Activated naive CD4-positive, alpha-beta T cell treated with anti-CD3 and anti-CD28 coated beads for 36 hours (primary cell): ENCODE measurements at regions of chr19 and their contacts with region 1.

Region 1: GRCh38 chr19:52734893-52735661 is at the start of gene ZNF611:
- DNase-seq: peak; percentile 99
- H3K4me3 Mint-ChIP-seq: peak within 1 kb of the TSS; percentile 85
- H3K27ac Mint-ChIP-seq: peak within 1 kb of the TSS; percentile 89
- H3K4me1 Mint-ChIP-seq: peaks cover 19% of the 10 kb centered on the region
- H3K27me3 Mint-ChIP-seq: no peaks in the 10 kb centered on the region
- total RNA-seq, gene ZNF611: 10.4 to 12.1 TPM

Region 2: DNA sequence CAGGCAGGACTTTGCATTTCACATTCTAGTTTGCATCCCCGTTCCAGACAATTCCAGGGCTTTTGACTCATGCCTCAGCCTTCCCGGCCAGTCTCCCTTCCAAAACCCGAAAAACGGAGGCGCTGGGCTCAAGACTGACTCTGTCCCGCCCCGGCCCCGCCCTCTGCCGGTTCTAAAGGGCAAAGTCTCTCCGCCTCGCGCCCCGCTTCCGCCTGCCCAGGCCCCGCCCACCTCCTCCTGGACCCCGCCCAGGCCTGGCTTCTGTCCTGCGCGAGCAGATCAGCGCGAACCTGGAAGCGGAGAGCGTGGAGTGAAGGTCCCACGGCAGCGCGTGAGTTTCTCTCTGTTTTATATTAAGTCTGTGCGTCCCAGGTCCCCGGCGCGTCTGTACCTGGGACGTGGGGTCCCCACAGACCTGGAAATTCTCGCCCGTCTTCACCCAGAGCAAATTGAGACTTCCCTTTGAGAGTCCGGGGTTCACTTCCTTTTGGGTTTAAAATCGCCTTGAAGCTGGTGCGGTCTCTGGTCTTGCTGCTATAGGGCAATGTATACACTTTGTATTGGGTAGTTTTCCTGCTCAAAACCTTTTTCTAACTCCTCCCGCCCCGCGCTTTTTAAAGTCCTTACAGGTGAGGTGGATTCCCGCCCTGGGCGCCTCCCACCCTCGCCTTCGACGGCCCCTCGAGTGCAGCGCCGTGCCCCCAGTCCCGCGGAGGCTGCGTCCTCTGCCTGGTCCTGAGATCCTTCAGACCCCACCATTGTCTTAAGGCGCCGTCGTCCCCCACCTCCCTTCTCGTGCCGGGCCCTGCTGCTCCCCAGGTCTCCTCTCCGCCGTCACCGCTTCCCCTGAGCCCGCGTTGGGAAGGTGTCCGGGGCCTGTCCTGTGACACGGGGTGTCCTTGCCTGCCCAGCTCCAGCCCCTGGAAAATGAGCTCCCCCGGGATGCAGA is 133.8 kb before region 1 on chr19:
- CTCF ChIA-PET with region 1: no interaction called
- intact Hi-C with region 1: loop called (anchors 10 kb)
- DNase-seq: peak; percentile 95
- H3K4me3 Mint-ChIP-seq: peak overlapping the region; percentile 79
- H3K27ac Mint-ChIP-seq: peak overlapping the region; percentile 79
- H3K4me1 Mint-ChIP-seq: peaks cover 18% of the 10 kb centered on the region
- H3K27me3 Mint-ChIP-seq: no peaks in the 10 kb centered on the region

Region 3: GRCh38 chr19:52637718-52638585 is 97.1 kb before region 1 on chr19 and contains the start of gene ZNF83:
- CTCF ChIA-PET with region 1: no interaction called
- intact Hi-C with region 1: loop called (anchors 2 kb)
- DNase-seq: peak; percentile 96
- H3K4me3 Mint-ChIP-seq: peak within 1 kb of the TSS; percentile 85
- H3K27ac Mint-ChIP-seq: peak within 1 kb of the TSS; percentile 92
- H3K4me1 Mint-ChIP-seq: peaks cover 9% of the 10 kb centered on the region
- H3K27me3 Mint-ChIP-seq: no peaks in the 10 kb centered on the region
- total RNA-seq, gene ZNF83: 23.3 to 23.9 TPM

Region 4: DNA sequence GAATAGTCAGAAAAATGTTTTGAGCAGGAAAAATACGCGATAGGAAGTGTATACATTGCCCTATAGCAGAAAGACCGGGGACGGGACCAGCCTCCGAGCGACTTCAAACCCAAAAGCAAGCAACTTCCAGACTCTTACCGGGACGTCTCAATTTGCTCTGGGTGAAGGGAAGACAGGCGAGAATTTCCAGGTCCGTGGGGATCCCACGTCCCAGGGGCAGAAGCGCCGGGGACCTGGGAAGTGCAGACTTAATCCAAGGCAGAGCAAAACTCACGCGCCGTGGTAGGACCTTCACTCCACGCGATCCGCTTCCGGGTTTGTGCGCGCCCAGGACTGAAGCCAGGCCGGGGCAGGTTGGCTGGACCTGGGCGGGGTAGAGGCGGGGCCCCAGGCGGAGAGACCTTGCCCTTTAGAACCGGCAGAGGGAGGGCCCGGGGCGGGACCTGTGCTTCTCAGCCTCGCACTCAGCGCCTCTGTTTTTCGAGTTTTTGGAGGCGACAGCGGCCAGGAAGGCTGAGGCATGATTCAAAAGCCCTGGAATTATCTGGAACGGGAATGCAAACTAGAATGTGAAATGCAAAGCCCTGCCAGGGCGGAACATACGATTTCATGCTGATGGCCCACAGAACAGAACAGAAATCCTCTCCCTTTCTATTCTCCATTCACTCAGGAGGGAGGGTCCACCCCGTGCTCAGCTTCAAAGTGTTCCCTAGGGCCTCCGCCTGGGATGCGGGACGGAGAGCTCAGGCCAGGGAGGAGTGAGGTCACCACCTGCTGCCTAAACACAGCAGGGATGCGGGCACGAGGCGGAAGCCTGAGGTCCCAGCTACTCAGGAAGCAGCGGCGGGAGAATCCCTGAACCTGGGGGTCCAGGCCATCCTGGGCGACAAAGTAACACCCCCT is 51.6 kb after region 1 on chr19 and contains the start of gene ZNF600:
- CTCF ChIA-PET with region 1: no interaction called
- intact Hi-C with region 1: no loop called
- DNase-seq: peak; percentile 84
- H3K4me3 Mint-ChIP-seq: peak within 1 kb of the TSS; percentile 83
- H3K27ac Mint-ChIP-seq: peak within 1 kb of the TSS; percentile 50
- H3K4me1 Mint-ChIP-seq: peaks cover 28% of the 10 kb centered on the region
- H3K27me3 Mint-ChIP-seq: no peaks in the 10 kb centered on the region
- total RNA-seq, gene ZNF600: 4.8 to 4.9 TPM